ENCODE measurements at regions of chr17 and their contacts with region 1.

Region 1: DNA sequence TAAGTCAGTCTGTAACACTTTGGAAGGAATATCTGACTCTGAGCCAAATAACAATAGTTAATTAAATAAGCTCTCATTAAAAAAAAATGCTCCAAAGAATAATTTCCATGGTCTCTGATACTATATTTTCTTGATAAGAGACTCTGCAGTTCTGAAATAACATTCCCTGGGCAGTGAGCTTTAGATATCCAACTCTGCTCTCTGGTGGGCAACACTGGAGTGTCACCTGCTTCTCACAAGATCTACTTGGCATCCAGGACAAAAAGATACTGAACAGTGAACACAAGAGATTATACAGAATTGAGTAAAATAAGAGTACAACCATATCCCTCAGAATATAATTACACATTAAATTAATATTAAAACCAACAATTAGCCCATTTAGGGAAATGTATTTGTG is 13.7 kb downstream of the BLMH start:
- DNase-seq: peak in 1 of 3 donors; percentile 50
- ATAC-seq: peak; percentile 76 to 92 (median 88)
- H3K4me3 ChIP-seq: no peak overlapping the region
- H3K27ac ChIP-seq: no peak overlapping the region
- H3K4me1 ChIP-seq: no peaks in the 10 kb centered on the region
- H3K27me3 ChIP-seq: no peaks in the 10 kb centered on the region
- CTCF ChIP-seq: peak; percentile 42 to 73 (median 70)
- POLR2A ChIP-seq: no peak

Region 2: DNA sequence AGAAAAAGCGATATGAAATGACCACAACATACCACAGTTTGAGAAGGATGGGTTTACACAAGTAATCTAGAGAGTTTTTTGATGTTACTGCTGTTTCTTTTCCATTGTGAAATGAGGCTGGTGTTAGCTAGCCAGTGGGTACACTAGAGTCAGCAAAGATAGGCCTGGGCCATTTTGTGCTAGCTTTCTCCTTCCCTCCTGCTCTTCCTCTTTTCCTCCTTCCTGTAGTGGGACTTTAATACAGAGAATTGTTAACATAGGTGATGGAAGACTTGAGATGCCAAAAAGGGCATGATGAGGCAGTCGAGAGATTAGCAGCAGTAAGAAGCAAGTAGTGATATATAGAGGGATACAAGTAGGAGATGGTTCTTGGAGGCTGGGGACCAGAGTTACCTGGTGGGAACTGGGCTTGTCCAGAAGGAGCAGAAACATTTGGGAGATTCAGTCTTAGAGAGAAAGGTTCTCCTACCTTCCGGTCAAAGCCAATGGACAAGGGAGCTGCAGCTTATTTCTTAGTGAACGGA is 153.7 kb before region 1 on chr17:
- intact Hi-C with region 1: loop called in 1 of 2 experiments (anchors 10 kb)
- DNase-seq: no peak
- ATAC-seq: no peak
- H3K4me3 ChIP-seq: no peak overlapping the region
- H3K27ac ChIP-seq: no peak overlapping the region
- H3K4me1 ChIP-seq: peaks cover 0 to 3% (median 0%) of the 10 kb centered on the region in 4 donors
- H3K27me3 ChIP-seq: no peaks in the 10 kb centered on the region
- CTCF ChIP-seq: no peak
- POLR2A ChIP-seq: no peak

Region 3: GRCh38 chr17:30187573-30187972 is 90.5 kb before region 1 on chr17:
- intact Hi-C with region 1: no loop called
- DNase-seq: no peak
- ATAC-seq: no peak
- H3K4me3 ChIP-seq: no peak overlapping the region
- H3K27ac ChIP-seq: no peak overlapping the region
- H3K4me1 ChIP-seq: no peaks in the 10 kb centered on the region
- H3K27me3 ChIP-seq: no peaks in the 10 kb centered on the region
- CTCF ChIP-seq: no peak
- POLR2A ChIP-seq: no peak

Region 4: GRCh38 chr17:30230591-30231125 is 47.4 kb before region 1 on chr17:
- intact Hi-C with region 1: no loop called
- DNase-seq: no peak
- ATAC-seq: no peak
- H3K4me3 ChIP-seq: no peak overlapping the region
- H3K27ac ChIP-seq: no peak overlapping the region
- H3K4me1 ChIP-seq: peaks cover 0 to 10% (median 0%) of the 10 kb centered on the region in 4 donors
- H3K27me3 ChIP-seq: no peaks in the 10 kb centered on the region
- CTCF ChIP-seq: no peak
- POLR2A ChIP-seq: no peak

Measured in right lobe of liver (tissue), 6 donors.